Transverse colon (tissue), 4 donors: ENCODE measurements at regions of chr13 and their contacts with region 1.

Region 1: DNA sequence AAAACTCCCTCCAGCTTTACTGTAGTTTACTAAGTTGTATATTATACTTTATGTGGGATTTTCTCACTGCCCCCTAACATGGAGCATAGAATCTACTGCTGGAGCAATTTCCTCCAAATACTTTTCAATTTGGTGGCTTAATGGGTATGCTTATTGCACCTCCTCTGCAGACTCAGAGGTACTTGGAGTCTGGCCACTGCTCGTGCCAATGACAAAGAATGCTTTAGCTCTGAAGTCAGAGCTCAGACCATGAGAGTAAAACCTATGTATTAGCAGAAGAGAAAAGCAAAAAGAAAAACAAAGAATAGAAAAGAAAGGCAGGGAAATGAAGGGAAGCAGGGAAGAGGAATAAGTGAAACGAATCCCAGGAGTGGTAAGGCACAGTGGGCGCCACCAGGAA is 71.9 kb downstream of the SUCLA2 start:
- DNase-seq: no peak
- H3K4me3 ChIP-seq: no peak overlapping the region
- H3K27ac ChIP-seq: no peak overlapping the region
- H3K4me1 ChIP-seq: no peaks in the 10 kb centered on the region
- H3K27me3 ChIP-seq: no peaks in the 10 kb centered on the region
- CTCF ChIP-seq: no peak
- EP300 ChIP-seq: no peak
- POLR2A ChIP-seq: no peak

Region 2: GRCh38 chr13:47076500-47076899 is 852.7 kb before region 1 on chr13:
- in situ Hi-C with region 1: no loop called
- intact Hi-C with region 1: no loop called
- DNase-seq: no peak
- H3K4me3 ChIP-seq: no peak overlapping the region
- H3K27ac ChIP-seq: no peak overlapping the region
- H3K4me1 ChIP-seq: no peaks in the 10 kb centered on the region
- H3K27me3 ChIP-seq: no peaks in the 10 kb centered on the region
- CTCF ChIP-seq: no peak
- EP300 ChIP-seq: no peak
- POLR2A ChIP-seq: no peak

Region 3: DNA sequence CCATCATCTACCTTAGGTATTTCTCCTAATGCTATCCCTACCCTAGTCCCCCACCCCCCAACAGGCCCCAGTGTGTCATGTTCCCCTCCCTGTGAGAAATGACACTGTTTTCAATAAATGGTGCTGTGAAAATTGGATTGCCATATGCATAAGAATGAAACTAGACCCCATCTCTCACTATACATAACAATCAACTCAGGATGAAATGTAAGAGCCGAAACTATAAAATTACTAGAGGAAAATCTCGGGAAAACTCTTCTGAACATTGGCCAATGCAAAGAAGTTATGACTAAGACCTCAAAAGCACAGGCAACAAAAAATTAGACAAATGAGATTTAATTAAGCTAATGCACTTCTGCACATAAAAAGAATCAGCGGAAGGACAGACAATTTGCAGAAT is 66.3 kb before region 1 on chr13:
- in situ Hi-C with region 1: no loop called
- intact Hi-C with region 1: loop called (anchors 2 kb)
- DNase-seq: no peak
- H3K4me3 ChIP-seq: no peak overlapping the region
- H3K27ac ChIP-seq: no peak overlapping the region
- H3K4me1 ChIP-seq: no peaks in the 10 kb centered on the region
- H3K27me3 ChIP-seq: no peaks in the 10 kb centered on the region
- CTCF ChIP-seq: no peak
- EP300 ChIP-seq: no peak
- POLR2A ChIP-seq: no peak

Region 4: GRCh38 chr13:48050550-48050949 is 121.4 kb after region 1 on chr13:
- in situ Hi-C with region 1: no loop called
- intact Hi-C with region 1: no loop called
- DNase-seq: no peak
- H3K4me3 ChIP-seq: no peak overlapping the region
- H3K27ac ChIP-seq: no peak overlapping the region
- H3K4me1 ChIP-seq: no peaks in the 10 kb centered on the region
- H3K27me3 ChIP-seq: no peaks in the 10 kb centered on the region
- CTCF ChIP-seq: no peak
- EP300 ChIP-seq: no peak
- POLR2A ChIP-seq: no peak